ENCODE measurements at regions of chr6 and their contacts with region 1.

Region 1: GRCh38 chr6:106512048-106512967 is 117.0 kb downstream of the RTN4IP1 start:
- DNase-seq: peak; percentile 68 to 83 (median 78)
- ATAC-seq: peak; percentile 86
- H3K4me3 ChIP-seq: peak overlapping the region; percentile 92
- H3K4me3 Mint-ChIP-seq: peak overlapping the region; percentile 89 to 98 (median 96)
- H3K27ac ChIP-seq: peak overlapping the region; percentile 100
- H3K27ac Mint-ChIP-seq: peak overlapping the region; percentile 92 to 99 (median 96)
- H3K4me1 ChIP-seq: peaks cover 28 to 41% of the 10 kb centered on the region in 2 donors
- H3K4me1 Mint-ChIP-seq: peaks cover 34 to 60% (median 51%) of the 10 kb centered on the region in 7 donors
- H3K27me3 ChIP-seq: no peaks in the 10 kb centered on the region
- H3K27me3 Mint-ChIP-seq: peaks cover 0 to 40% (median 0%) of the 10 kb centered on the region in 5 donors

Region 2: GRCh38 chr6:106244931-106245330 is 267.4 kb before region 1 on chr6:
- CTCF ChIA-PET with region 1: no interaction called
- POLR2A ChIA-PET with region 1: no interaction called
- intact Hi-C with region 1: no loop called
- DNase-seq: no peak
- ATAC-seq: no peak
- H3K4me3 ChIP-seq: no peak overlapping the region
- H3K4me3 Mint-ChIP-seq: no peak overlapping the region
- H3K27ac ChIP-seq: no peak overlapping the region
- H3K27ac Mint-ChIP-seq: no peak overlapping the region
- H3K4me1 ChIP-seq: no peaks in the 10 kb centered on the region
- H3K4me1 Mint-ChIP-seq: peaks cover 0 to 6% (median 2%) of the 10 kb centered on the region in 7 donors
- H3K27me3 ChIP-seq: no peaks in the 10 kb centered on the region
- H3K27me3 Mint-ChIP-seq: no peaks in the 10 kb centered on the region

Region 3: GRCh38 chr6:106444777-106445507 is 67.4 kb before region 1 on chr6:
- CTCF ChIA-PET with region 1: interaction called, 8 read pairs
- POLR2A ChIA-PET with region 1: interaction called, 4 read pairs
- intact Hi-C with region 1: loop called (anchors 1 kb)
- DNase-seq: peak in 7 of 9 donors; percentile 55 to 81 (median 70)
- ATAC-seq: peak; percentile 81
- H3K4me3 ChIP-seq: no peak overlapping the region
- H3K4me3 Mint-ChIP-seq: no peak overlapping the region
- H3K27ac ChIP-seq: no peak overlapping the region
- H3K27ac Mint-ChIP-seq: peak overlapping the region in 1 of 9 donors; percentile 43
- H3K4me1 ChIP-seq: peaks cover 0 to 5% of the 10 kb centered on the region in 2 donors
- H3K4me1 Mint-ChIP-seq: peaks cover 5 to 16% (median 14%) of the 10 kb centered on the region in 7 donors
- H3K27me3 ChIP-seq: peaks cover 0 to 4% of the 10 kb centered on the region in 2 donors
- H3K27me3 Mint-ChIP-seq: peaks cover 19 to 36% (median 27%) of the 10 kb centered on the region in 5 donors

Region 4: GRCh38 chr6:106534564-106534982 is 22.3 kb after region 1 on chr6:
- CTCF ChIA-PET with region 1: interaction called, 17 read pairs
- POLR2A ChIA-PET with region 1: interaction called, 14 read pairs
- intact Hi-C with region 1: no loop called
- DNase-seq: peak in 1 of 9 donors; percentile 53
- ATAC-seq: peak; percentile 50
- H3K4me3 ChIP-seq: no peak overlapping the region
- H3K4me3 Mint-ChIP-seq: peak overlapping the region in 5 of 10 donors; percentile 7 to 51 (median 43)
- H3K27ac ChIP-seq: no peak overlapping the region
- H3K27ac Mint-ChIP-seq: peak overlapping the region; percentile 2 to 88 (median 66)
- H3K4me1 ChIP-seq: peaks cover 19 to 28% of the 10 kb centered on the region in 2 donors
- H3K4me1 Mint-ChIP-seq: peaks cover 34 to 88% (median 80%) of the 10 kb centered on the region in 7 donors
- H3K27me3 ChIP-seq: no peaks in the 10 kb centered on the region
- H3K27me3 Mint-ChIP-seq: no peaks in the 10 kb centered on the region

Region 5: GRCh38 chr6:106556368-106556960 is 44.2 kb after region 1 on chr6:
- CTCF ChIA-PET with region 1: interaction called, 74 read pairs
- POLR2A ChIA-PET with region 1: interaction called, 22 read pairs
- intact Hi-C with region 1: loop called (anchors 1 kb)
- DNase-seq: peak in 6 of 9 donors; percentile 25 to 61 (median 49)
- ATAC-seq: peak; percentile 64
- H3K4me3 ChIP-seq: no peak overlapping the region
- H3K4me3 Mint-ChIP-seq: no peak overlapping the region
- H3K27ac ChIP-seq: no peak overlapping the region
- H3K27ac Mint-ChIP-seq: peak overlapping the region in 4 of 9 donors; percentile 1 to 56 (median 33)
- H3K4me1 ChIP-seq: no peaks in the 10 kb centered on the region
- H3K4me1 Mint-ChIP-seq: peaks cover 0 to 21% (median 6%) of the 10 kb centered on the region in 7 donors
- H3K27me3 ChIP-seq: no peaks in the 10 kb centered on the region
- H3K27me3 Mint-ChIP-seq: no peaks in the 10 kb centered on the region

Region 6: DNA sequence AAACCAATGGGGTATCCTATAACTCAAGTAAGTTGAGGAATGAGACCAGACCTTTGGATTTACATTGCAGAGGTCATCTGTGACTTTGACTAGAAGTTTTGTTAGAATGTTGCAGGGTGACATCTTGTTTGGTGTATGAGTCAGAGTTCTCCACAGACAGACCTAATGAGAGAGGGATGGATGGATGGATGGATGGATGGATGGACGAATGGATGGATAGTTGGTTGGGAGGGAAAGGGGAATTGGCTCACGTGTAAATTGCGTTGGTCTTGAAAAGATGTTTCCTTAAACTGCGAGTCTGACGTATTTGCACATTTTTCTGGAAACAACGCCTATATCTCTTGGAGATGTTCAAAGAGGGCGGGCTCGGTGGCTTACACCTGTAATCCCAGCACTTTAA is 514.7 kb after region 1 on chr6:
- CTCF ChIA-PET with region 1: no interaction called
- POLR2A ChIA-PET with region 1: no interaction called
- intact Hi-C with region 1: loop called in 1 of 2 experiments (anchors 5 kb)
- DNase-seq: no peak
- ATAC-seq: no peak
- H3K4me3 ChIP-seq: no peak overlapping the region
- H3K4me3 Mint-ChIP-seq: peak overlapping the region; percentile 4 to 99 (median 94)
- H3K27ac ChIP-seq: no peak overlapping the region
- H3K27ac Mint-ChIP-seq: peak overlapping the region in 5 of 9 donors; percentile 32 to 92 (median 63)
- H3K4me1 ChIP-seq: peaks cover 3 to 14% of the 10 kb centered on the region in 2 donors
- H3K4me1 Mint-ChIP-seq: peaks cover 20 to 35% (median 29%) of the 10 kb centered on the region in 7 donors
- H3K27me3 ChIP-seq: no peaks in the 10 kb centered on the region
- H3K27me3 Mint-ChIP-seq: no peaks in the 10 kb centered on the region

Measured in naive thymus-derived CD4-positive, alpha-beta T cell (primary cell).